Caco-2 (cell line): ENCODE measurements at regions of chr13 and their contacts with region 1.

Region 1: DNA sequence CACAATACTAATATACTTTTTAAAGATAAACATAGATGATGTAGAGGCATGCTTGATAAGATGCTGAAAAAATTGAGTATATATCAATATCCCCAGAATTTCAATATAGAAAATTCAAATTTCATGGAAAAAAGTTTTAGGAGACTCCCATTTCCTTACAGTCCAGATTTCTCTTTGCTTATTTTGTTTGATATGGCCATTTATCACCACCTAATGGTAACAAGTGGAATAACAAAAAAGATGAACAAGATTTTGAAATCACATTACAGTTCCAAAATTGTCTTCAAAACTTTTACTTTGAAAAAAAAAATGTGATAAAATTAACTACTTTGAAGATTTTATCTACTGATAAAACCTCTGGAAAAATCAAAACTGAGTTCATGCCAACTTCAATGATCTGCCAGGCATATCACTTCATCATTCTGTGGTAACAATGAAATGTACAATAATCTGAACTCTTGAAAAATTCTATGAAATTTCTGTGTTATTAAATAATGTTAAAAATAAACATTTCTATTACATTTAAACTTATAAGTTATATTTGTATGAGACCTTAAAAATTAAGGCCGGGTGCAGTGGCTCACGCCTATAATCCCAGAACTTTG is 17.5 kb downstream of the MIPEP start:
- DNase-seq: no peak
- H3K4me3 ChIP-seq: no peak overlapping the region
- H3K4me3 Mint-ChIP-seq: no peak overlapping the region
- H3K27ac Mint-ChIP-seq: no peak overlapping the region
- H3K4me1 ChIP-seq: peaks cover 6% of the 10 kb centered on the region; the same call in 1 of the 2 replicates
- H3K4me1 Mint-ChIP-seq: no peaks in the 10 kb centered on the region
- H3K27me3 ChIP-seq: no peaks in the 10 kb centered on the region
- H3K27me3 Mint-ChIP-seq: no peaks in the 10 kb centered on the region
- CTCF ChIP-seq: peak; percentile 42 to 69

Region 2: GRCh38 chr13:23510979-23511735 is 360.6 kb before region 1 on chr13:
- CTCF ChIA-PET with region 1: no interaction called
- POLR2A ChIA-PET with region 1: no interaction called
- intact Hi-C with region 1: loop called (anchors 1 kb)
- DNase-seq: peak; percentile 48 to 58
- H3K4me3 ChIP-seq: no peak overlapping the region
- H3K4me3 Mint-ChIP-seq: no peak overlapping the region
- H3K27ac Mint-ChIP-seq: no peak overlapping the region
- H3K4me1 ChIP-seq: peaks cover 13% of the 10 kb centered on the region
- H3K4me1 Mint-ChIP-seq: peaks cover 7% of the 10 kb centered on the region
- H3K27me3 ChIP-seq: no peaks in the 10 kb centered on the region
- H3K27me3 Mint-ChIP-seq: no peaks in the 10 kb centered on the region
- CTCF ChIP-seq: peak; percentile 40 to 62

Region 3: DNA sequence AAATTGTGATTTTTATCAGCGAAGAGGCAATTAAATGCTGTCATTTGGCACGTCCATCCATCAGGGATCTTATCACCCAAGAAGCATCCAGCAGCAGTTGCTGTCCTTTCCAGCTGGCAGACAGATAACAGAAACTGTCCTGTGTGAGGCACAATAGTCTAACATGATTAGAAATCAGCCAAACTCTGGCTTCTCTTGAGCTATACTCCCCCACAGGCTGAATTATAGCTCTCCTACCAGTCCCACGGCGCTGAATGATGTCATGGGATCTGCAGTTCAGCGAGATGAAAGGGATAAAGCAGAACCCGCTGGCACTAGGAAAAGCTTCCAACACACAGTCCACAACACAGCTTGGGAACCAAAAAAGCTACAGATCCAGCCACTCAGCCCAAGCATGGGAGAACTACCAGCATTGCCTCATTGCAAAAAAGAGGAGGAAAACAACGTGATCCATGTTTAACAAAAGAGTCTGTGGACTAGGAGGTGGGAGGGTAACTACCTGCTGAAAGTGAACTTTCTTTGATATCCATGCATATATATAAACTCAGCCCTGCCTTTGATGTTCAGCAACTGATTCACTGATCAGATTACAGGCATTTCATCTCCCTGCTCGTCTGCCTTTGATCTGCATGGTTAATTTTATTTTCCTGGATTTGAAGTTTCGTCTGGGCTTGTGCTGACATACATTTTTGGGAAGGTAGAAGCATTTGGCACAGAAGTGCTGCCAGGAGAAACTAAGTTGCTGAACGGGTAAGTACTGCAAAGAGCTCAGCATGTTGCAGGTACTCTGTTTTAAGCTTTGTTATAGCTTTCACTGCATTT is 301.4 kb before region 1 on chr13 and contains the start of gene TNFRSF19:
- CTCF ChIA-PET with region 1: no interaction called
- POLR2A ChIA-PET with region 1: no interaction called
- intact Hi-C with region 1: loop called (anchors 2 kb)
- DNase-seq: peak; percentile 79 to 88
- H3K4me3 ChIP-seq: peak within 1 kb of the TSS; percentile 32
- H3K4me3 Mint-ChIP-seq: peak within 1 kb of the TSS; percentile 88
- H3K27ac Mint-ChIP-seq: peak within 1 kb of the TSS; percentile 87
- H3K4me1 ChIP-seq: peaks cover 31% of the 10 kb centered on the region
- H3K4me1 Mint-ChIP-seq: peaks cover 14% of the 10 kb centered on the region
- H3K27me3 ChIP-seq: no peaks in the 10 kb centered on the region
- H3K27me3 Mint-ChIP-seq: no peaks in the 10 kb centered on the region
- CTCF ChIP-seq: no peak
- total RNA-seq, gene TNFRSF19: 63.4 and 66.4 TPM in 2 replicates

Region 4: GRCh38 chr13:23715762-23716235 is 155.9 kb before region 1 on chr13:
- CTCF ChIA-PET with region 1: no interaction called
- POLR2A ChIA-PET with region 1: no interaction called
- intact Hi-C with region 1: loop called (anchors 1 kb)
- DNase-seq: peak; percentile 72 to 74
- H3K4me3 ChIP-seq: no peak overlapping the region
- H3K4me3 Mint-ChIP-seq: no peak overlapping the region
- H3K27ac Mint-ChIP-seq: peak overlapping the region; percentile 24
- H3K4me1 ChIP-seq: peaks cover 22% of the 10 kb centered on the region
- H3K4me1 Mint-ChIP-seq: peaks cover 26% of the 10 kb centered on the region
- H3K27me3 ChIP-seq: no peaks in the 10 kb centered on the region
- H3K27me3 Mint-ChIP-seq: no peaks in the 10 kb centered on the region
- CTCF ChIP-seq: peak; percentile 46 to 51

Region 5: GRCh38 chr13:23770428-23770827 is 101.3 kb before region 1 on chr13:
- CTCF ChIA-PET with region 1: no interaction called
- POLR2A ChIA-PET with region 1: no interaction called
- intact Hi-C with region 1: loop called (anchors 1 kb)
- DNase-seq: peak in 1 of 2 experiments; percentile 28
- H3K4me3 ChIP-seq: no peak overlapping the region
- H3K4me3 Mint-ChIP-seq: no peak overlapping the region
- H3K27ac Mint-ChIP-seq: no peak overlapping the region
- H3K4me1 ChIP-seq: peaks cover 5% of the 10 kb centered on the region; the same call in 1 of the 2 replicates
- H3K4me1 Mint-ChIP-seq: peaks cover 20% of the 10 kb centered on the region
- H3K27me3 ChIP-seq: no peaks in the 10 kb centered on the region
- H3K27me3 Mint-ChIP-seq: no peaks in the 10 kb centered on the region
- CTCF ChIP-seq: peak in 1 of 2 experiments; percentile 16

Region 6: DNA sequence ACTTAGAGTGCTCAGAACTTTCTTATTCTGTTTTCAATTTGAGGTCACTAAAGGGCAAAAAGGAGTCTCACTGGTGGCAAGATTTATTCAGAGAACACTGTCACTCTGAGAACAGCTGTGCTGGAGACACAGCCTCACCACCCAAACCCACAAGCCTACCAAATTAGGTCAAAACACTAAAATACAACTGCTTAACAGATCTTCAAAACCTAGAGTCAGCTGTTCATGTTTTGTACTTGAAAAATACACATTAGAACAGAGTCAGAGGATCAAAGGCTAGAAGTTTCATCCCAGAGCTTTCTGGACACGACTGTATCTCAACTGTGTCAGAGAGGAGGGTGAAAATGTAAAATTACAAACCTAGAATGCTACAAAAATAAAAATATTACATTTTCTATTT is 71.8 kb before region 1 on chr13:
- CTCF ChIA-PET with region 1: no interaction called
- POLR2A ChIA-PET with region 1: no interaction called
- intact Hi-C with region 1: no loop called
- DNase-seq: no peak
- H3K4me3 ChIP-seq: no peak overlapping the region
- H3K4me3 Mint-ChIP-seq: no peak overlapping the region
- H3K27ac Mint-ChIP-seq: no peak overlapping the region
- H3K4me1 ChIP-seq: peaks cover 5% of the 10 kb centered on the region; the same call in 1 of the 2 replicates
- H3K4me1 Mint-ChIP-seq: peaks cover 4% of the 10 kb centered on the region
- H3K27me3 ChIP-seq: no peaks in the 10 kb centered on the region
- H3K27me3 Mint-ChIP-seq: no peaks in the 10 kb centered on the region
- CTCF ChIP-seq: no peak

Region 7: DNA sequence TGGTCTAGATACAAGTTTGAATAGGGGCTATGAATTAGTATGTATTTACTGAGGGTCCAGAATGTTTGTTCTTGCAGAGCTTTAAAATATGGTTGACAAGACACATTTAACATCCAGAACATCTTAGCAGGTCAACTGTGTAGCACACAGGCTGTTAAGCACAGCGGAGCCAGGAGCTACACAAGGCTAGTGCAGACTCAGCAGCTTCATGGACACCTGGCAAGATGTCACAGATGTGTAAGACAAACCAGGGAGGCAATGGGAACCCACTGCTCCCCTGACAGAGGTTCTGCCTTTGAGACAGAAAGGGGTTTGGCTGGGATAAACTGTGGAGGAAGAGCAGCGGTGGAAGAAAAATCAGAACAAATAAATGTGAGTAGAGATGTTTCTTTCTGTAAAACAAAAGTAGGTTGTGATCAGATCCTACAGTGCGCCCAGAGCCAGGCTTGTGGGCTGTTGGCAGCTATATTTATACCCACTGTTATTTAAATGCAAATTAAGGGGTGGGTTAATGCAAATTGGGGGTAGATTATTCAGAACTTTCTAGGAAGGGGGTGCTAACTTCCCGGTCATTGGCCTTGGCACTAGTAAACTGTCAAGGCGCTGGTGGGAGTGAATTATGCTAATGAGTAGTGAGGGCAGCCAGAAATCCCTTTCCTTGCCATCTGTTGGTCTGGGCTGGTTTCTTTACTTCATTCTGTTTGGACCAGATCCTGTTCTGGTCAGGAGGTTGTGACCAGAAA is 15.5 kb before region 1 on chr13:
- CTCF ChIA-PET with region 1: no interaction called
- POLR2A ChIA-PET with region 1: no interaction called
- intact Hi-C with region 1: no loop called
- DNase-seq: no peak
- H3K4me3 ChIP-seq: no peak overlapping the region
- H3K4me3 Mint-ChIP-seq: no peak overlapping the region
- H3K27ac Mint-ChIP-seq: no peak overlapping the region
- H3K4me1 ChIP-seq: peaks cover 7% of the 10 kb centered on the region; the same call in 1 of the 2 replicates
- H3K4me1 Mint-ChIP-seq: peaks cover 10% of the 10 kb centered on the region
- H3K27me3 ChIP-seq: no peaks in the 10 kb centered on the region
- H3K27me3 Mint-ChIP-seq: no peaks in the 10 kb centered on the region
- CTCF ChIP-seq: no peak

Region 8: GRCh38 chr13:23899555-23899954 is 27.8 kb after region 1 on chr13:
- CTCF ChIA-PET with region 1: interaction called, 3 read pairs
- POLR2A ChIA-PET with region 1: no interaction called
- intact Hi-C with region 1: loop called (anchors 1 kb)
- DNase-seq: peak; percentile 43 to 60
- H3K4me3 ChIP-seq: no peak overlapping the region
- H3K4me3 Mint-ChIP-seq: no peak overlapping the region
- H3K27ac Mint-ChIP-seq: no peak overlapping the region
- H3K4me1 ChIP-seq: peaks cover 7% of the 10 kb centered on the region
- H3K4me1 Mint-ChIP-seq: peaks cover 7% of the 10 kb centered on the region
- H3K27me3 ChIP-seq: no peaks in the 10 kb centered on the region
- H3K27me3 Mint-ChIP-seq: no peaks in the 10 kb centered on the region
- CTCF ChIP-seq: peak; percentile 66 to 75